Adrenal gland (tissue), 19 donors: ENCODE measurements at regions of chr16 and their contacts with region 1.

Region 1: DNA sequence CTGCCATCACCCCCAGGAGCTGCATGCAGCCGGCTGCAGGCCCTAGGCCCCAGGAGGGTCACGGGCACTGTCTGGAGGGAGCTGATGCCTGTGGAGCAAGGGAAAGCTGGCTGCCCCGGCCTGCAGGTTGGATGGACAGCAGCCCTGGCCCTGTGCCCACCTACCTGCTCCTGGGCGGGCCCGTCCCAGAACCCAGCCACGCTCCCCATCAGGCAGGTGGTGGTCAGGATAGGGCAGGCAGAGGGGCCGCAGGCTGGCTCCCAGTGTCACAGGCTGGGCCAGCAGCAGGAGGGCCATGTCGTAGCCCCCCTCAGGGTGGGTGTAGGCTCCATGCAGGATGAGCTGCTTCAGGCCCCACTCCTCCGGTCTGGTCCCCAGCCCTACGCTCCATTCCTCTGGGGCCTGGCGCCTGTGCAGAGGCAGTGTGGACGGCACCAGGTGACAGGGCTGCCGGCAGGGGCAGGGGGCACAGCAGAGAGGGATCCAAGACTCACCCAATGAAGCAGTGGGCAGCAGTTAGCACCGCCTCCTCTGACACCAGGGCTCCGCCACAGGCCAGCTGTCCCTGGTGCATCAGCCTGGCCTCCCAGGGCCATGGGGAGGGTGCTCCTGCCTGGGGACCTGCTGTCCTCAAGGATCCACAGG is 4.0 kb downstream of the PRSS53 start:
- DNase-seq: peak in 5 of 7 donors; percentile 29 to 72 (median 44)
- H3K4me3 ChIP-seq: no peak overlapping the region
- H3K27ac ChIP-seq: peak overlapping the region in 2 of 5 donors; percentile 8 to 45
- H3K4me1 ChIP-seq: no peaks in the 10 kb centered on the region
- H3K27me3 ChIP-seq: no peaks in the 10 kb centered on the region
- CTCF ChIP-seq: no peak
- POLR2A ChIP-seq: no peak

Region 2: DNA sequence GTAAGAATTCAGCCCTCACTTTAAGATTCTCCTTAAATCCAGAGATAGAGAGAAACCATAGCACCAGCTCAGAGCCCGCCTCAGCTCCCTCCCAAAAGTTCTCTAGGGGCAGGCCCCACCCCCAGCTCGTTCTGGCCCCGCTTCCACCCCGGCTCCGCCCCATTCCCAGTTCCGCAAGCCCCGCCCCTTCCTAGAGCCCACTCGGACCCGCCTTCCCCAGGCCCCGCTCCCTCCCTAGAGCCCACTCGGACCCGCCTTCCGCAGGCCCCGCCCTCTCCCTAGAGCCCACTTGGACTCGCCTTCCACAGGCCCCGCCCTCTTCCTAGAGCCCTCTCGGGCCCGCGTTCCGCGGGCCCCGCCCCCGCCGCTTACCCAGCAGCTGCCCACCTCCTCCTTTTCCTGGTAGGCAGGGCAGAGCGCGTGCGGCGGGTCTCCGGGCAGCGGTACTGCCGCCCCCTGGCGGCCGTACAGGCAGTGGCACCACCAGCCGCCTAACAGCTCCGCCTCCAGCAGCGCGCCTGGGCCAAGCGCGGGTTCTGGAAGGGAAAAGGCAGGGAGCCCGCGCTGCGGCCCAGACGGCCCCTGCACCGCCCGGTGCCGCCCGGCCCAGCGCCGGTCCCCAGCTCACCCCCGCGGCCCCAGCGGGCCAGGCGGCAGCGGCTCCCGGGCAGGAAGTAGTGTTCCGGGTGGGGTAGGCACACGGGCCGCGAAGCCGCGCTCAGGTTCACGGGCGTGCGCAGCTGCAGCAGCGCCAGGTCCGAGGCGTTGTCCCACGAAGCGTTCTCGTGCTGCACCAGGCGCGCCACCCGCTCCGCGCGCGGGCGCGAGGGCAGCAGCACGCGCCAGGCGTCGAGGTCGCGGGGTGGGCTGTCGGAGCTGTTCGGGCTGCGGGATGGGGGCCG is 57.6 kb after region 1 on chr16:
- intact Hi-C with region 1: loop called in 1 of 2 experiments (anchors 10 kb)
- DNase-seq: peak; percentile 99
- H3K4me3 ChIP-seq: peak overlapping the region in 2 of 4 donors; percentile 18 to 53
- H3K27ac ChIP-seq: peak overlapping the region; percentile 70 to 94 (median 91)
- H3K4me1 ChIP-seq: peaks cover 23 to 26% of the 10 kb centered on the region in 2 donors
- H3K27me3 ChIP-seq: no peaks in the 10 kb centered on the region
- CTCF ChIP-seq: peak; percentile 83 to 100 (median 96)
- POLR2A ChIP-seq: peak in 1 of 2 donors; percentile 81